AG04449 (cell line): ENCODE measurements at regions of chr7 and their contacts with region 1.

Region 1: GRCh38 chr7:140003913-140004382 is 58.8 kb downstream of the PARP12 start:
- DNase-seq: no peak
- H3K4me3 ChIP-seq: no peak overlapping the region
- CTCF ChIP-seq: peak; percentile 42

Region 2: GRCh38 chr7:139431010-139431409 is 572.9 kb before region 1 on chr7:
- CTCF ChIA-PET with region 1: interaction called, 17 read pairs
- POLR2A ChIA-PET with region 1: no interaction called
- DNase-seq: no peak
- H3K4me3 ChIP-seq: no peak overlapping the region
- CTCF ChIP-seq: no peak

Region 3: DNA sequence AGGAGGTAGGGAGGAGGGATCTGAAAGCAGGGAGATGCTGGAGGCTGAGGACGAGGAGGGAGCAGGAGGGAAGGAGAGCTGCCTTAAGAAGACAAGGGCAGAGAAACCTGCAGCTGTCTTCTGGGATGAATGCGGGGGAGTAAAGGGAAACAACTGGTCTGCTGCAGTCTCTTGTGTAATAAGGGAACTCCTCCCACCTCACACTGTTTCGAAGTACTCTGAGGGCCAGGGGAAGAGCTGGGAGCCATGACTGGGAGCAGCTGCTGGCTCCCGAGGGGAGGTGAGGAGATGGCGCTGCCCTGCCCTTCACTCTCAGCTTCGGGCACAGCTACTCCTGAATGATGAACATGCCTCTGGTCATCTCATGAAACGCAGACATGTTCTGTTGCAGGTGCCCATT is 415.3 kb before region 1 on chr7:
- CTCF ChIA-PET with region 1: interaction called, 15 read pairs
- POLR2A ChIA-PET with region 1: interaction called, 3 read pairs
- DNase-seq: peak; percentile 9
- H3K4me3 ChIP-seq: no peak overlapping the region
- CTCF ChIP-seq: no peak

Region 4: DNA sequence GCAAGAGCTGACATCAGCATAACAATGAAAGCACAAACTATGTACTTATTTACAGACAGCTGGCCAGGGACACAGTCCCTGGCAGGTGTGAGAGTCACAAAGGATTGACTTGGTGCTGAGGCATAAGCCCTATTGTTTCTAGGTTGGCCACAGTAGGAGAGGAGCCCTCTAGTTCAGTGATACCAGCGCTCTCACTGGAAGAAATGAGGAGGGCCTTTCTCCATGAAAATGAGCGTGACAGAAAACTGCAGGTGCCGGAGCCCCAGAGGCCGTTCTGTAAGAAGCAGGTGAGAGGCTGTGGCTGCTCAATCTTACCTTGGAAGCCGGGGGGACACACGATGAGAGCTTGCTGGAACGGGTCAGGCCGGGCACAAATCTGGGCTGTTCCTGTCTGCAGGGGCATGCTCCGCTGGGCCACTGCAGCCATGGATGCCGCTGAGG is 390.0 kb before region 1 on chr7:
- CTCF ChIA-PET with region 1: interaction called, 296 read pairs
- POLR2A ChIA-PET with region 1: no interaction called
- DNase-seq: no peak
- H3K4me3 ChIP-seq: no peak overlapping the region
- CTCF ChIP-seq: no peak

Region 5: GRCh38 chr7:139626817-139627216 is 377.1 kb before region 1 on chr7:
- CTCF ChIA-PET with region 1: interaction called, 296 read pairs
- POLR2A ChIA-PET with region 1: no interaction called
- DNase-seq: no peak
- H3K4me3 ChIP-seq: no peak overlapping the region
- CTCF ChIP-seq: no peak

Region 6: DNA sequence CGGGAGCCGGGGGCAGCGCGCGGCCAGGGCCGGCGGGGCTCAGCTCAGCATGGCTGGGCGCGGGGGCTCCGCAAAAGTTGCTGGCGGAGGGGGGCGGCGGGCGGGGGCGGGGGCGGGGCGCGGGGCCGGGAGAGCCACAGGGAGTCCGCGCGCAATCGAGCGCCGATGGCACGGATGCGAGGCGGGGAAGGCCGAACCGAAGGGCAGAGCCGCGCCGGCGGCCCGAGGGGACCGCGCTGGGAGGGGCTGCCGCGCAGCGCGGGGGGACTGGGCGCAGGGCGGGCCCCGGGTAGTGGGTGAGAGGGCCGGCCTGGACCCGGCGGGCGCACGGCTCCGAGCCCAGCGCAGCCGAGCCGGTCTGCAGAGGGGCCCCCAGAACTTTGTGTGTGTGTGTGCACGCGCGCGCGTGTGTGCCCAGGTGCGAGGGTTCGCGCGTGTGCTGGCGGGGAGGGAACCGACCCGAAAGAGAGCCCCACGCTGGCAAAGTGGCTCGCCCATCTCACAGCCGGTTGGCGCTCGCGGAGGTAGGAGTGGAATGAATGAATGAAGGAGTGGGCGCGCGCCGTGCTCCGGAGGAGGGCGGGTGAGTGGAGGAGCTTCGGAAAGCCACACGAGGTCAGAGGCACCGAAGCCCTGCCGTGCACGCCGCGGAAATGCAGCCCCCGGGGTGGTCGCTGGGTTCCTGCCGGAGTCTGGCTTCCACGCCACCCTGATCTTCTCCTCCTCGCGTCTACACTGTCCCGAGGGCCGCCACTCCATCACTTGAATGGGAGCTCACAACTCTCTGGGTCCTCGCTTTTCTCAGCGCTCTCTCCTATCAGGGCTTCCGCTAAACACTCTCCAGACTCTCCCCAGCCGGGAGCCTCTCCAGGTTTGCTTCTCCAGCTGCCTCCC is 225.8 kb before region 1 on chr7 and contains the start of gene HIPK2:
- CTCF ChIA-PET with region 1: interaction called, 28 read pairs
- POLR2A ChIA-PET with region 1: no interaction called
- DNase-seq: no peak
- H3K4me3 ChIP-seq: peak within 1 kb of the TSS; percentile 76
- CTCF ChIP-seq: no peak

Region 7: DNA sequence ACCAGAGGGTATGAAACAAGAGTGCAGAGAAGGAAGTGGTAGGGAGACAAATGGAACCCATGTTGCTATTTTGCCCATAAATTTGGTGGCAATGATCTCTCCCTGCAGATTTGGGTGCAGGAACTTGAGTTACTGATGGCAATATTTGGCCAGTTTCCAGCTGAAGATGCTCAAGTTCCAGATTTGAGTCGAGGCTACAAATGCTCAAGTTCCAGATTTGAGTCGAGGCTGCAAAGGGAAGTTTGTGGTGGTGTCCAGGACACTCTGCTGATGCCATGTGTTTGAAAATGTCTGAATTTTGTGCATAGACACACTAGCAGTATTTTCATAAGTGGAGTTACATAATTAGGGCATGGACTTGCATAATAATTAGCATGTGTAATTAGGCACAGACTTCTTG is 134.1 kb before region 1 on chr7:
- CTCF ChIA-PET with region 1: no interaction called
- POLR2A ChIA-PET with region 1: no interaction called
- DNase-seq: no peak
- H3K4me3 ChIP-seq: no peak overlapping the region
- CTCF ChIP-seq: no peak

Region 8: DNA sequence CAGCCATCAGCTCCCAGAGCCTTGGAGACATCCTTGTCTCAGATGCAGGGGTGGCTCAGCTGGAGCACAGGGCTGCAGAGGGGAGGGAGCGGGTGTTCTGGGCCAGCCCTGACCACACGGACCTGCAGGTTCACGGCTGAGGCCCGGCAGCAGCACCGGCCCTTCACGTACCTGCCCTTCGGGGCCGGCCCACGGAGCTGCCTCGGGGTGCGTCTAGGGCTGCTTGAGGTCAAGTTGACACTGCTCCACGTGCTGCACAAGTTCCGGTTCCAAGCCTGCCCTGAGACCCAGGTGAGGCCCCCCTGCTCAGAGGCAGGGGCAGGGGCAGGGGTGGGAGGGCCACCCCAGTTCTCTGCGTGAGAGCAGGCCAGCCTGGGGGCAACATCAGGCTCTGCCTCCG is 13.6 kb after region 1 on chr7:
- CTCF ChIA-PET with region 1: interaction called, 16 read pairs
- POLR2A ChIA-PET with region 1: no interaction called
- DNase-seq: no peak
- H3K4me3 ChIP-seq: no peak overlapping the region
- CTCF ChIP-seq: no peak